IMR-90 (cell line): ENCODE measurements at regions of chr11 and their contacts with region 1.

Region 1: GRCh38 chr11:56876621-56877275 is 112.0 kb upstream of the OR5AK2 start:
- DNase-seq: peak; percentile 1
- ATAC-seq: no peak
- H3K4me3 ChIP-seq: no peak overlapping the region
- H3K27ac ChIP-seq: no peak overlapping the region
- H3K4me1 ChIP-seq: no peaks in the 10 kb centered on the region
- H3K27me3 ChIP-seq: no peaks in the 10 kb centered on the region
- CTCF ChIP-seq: no peak
- POLR2A ChIP-seq: no peak
- RAD21 ChIP-seq: no peak

Region 2: DNA sequence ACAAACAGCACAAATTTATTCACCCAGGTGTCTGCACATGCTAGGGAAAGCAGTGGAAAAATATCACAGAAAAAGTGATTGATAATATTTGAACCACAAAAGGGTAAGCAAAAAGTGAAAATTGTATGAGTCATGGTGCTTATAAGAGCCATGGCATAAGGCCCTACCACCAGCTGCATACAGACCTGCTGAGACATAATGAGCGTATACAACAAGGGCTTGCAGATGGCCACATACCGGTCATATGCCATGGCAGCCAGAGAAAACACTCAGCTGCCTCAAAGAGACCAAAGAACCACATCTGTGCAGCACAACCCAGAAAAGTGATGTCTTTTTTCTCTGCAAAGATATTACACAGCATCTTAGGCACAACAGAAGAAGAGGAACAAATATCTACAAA is 56.8 kb before region 1 on chr11:
- CTCF ChIA-PET with region 1: no interaction called
- POLR2A ChIA-PET with region 1: no interaction called
- dilution Hi-C with region 1: no loop called
- in situ Hi-C with region 1: no loop called
- intact Hi-C with region 1: loop called (anchors 10 kb)
- DNase-seq: no peak
- ATAC-seq: no peak
- H3K4me3 ChIP-seq: no peak overlapping the region
- H3K27ac ChIP-seq: no peak overlapping the region
- H3K4me1 ChIP-seq: no peaks in the 10 kb centered on the region
- H3K27me3 ChIP-seq: no peaks in the 10 kb centered on the region
- CTCF ChIP-seq: no peak
- POLR2A ChIP-seq: no peak
- RAD21 ChIP-seq: no peak